ENCODE measurements at regions of chr6 and their contacts with region 1.

Region 1: GRCh38 chr6:35202066-35202546 is 11.7 kb upstream of the SCUBE3 start:
- DNase-seq: no peak
- H3K4me3 ChIP-seq: no peak overlapping the region
- H3K4me3 Mint-ChIP-seq: no peak overlapping the region
- H3K27ac ChIP-seq: no peak overlapping the region
- H3K27ac Mint-ChIP-seq: no peak overlapping the region
- H3K4me1 ChIP-seq: no peaks in the 10 kb centered on the region
- H3K4me1 Mint-ChIP-seq: peaks cover 0 to 2% (median 0%) of the 10 kb centered on the region in 4 donors
- H3K27me3 ChIP-seq: peaks cover 19% of the 10 kb centered on the region
- H3K27me3 Mint-ChIP-seq: peaks cover 32 to 54% of the 10 kb centered on the region in 2 donors

Region 2: DNA sequence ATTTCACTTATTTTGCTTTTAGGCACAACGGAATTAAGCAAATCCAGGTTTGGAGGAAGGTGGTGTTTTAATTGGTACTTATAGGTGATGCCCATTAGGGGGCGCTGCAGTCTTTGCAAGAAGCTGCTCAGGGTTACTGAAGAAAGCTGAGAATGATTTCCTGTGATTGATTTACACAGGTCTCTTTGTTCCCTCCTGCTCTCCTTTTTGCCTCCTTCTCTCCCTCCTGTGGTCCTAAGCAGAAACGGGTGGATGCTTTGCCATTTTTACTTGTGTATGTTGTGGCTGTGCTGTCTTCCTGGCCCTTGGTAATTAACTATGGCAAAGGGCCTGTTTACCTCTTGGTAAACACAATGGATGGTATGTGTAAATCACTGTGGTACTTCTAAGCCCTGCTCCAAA is 215.3 kb before region 1 on chr6:
- CTCF ChIA-PET with region 1: interaction called, 7 read pairs
- POLR2A ChIA-PET with region 1: no interaction called
- intact Hi-C with region 1: loop called (anchors 1 kb)
- DNase-seq: peak; percentile 45 to 60 (median 52)
- H3K4me3 ChIP-seq: no peak overlapping the region
- H3K4me3 Mint-ChIP-seq: no peak overlapping the region
- H3K27ac ChIP-seq: no peak overlapping the region
- H3K27ac Mint-ChIP-seq: no peak overlapping the region
- H3K4me1 ChIP-seq: no peaks in the 10 kb centered on the region
- H3K4me1 Mint-ChIP-seq: no peaks in the 10 kb centered on the region
- H3K27me3 ChIP-seq: no peaks in the 10 kb centered on the region
- H3K27me3 Mint-ChIP-seq: no peaks in the 10 kb centered on the region

Region 3: GRCh38 chr6:36874443-36875249 is 1672.5 kb after region 1 on chr6 and contains the start of gene PPIL1:
- CTCF ChIA-PET with region 1: no interaction called
- POLR2A ChIA-PET with region 1: no interaction called
- intact Hi-C with region 1: no loop called
- DNase-seq: peak; percentile 91 to 94 (median 92)
- H3K4me3 ChIP-seq: peak within 1 kb of the TSS; percentile 95 to 96
- H3K4me3 Mint-ChIP-seq: peak within 1 kb of the TSS; percentile 95 to 100 (median 98)
- H3K27ac ChIP-seq: peak within 1 kb of the TSS; percentile 87
- H3K27ac Mint-ChIP-seq: peak within 1 kb of the TSS; percentile 91 to 100 (median 98)
- H3K4me1 ChIP-seq: peaks cover 23% of the 10 kb centered on the region
- H3K4me1 Mint-ChIP-seq: peaks cover 22 to 37% (median 31%) of the 10 kb centered on the region in 4 donors
- H3K27me3 ChIP-seq: no peaks in the 10 kb centered on the region
- H3K27me3 Mint-ChIP-seq: peaks cover 0 to 1% of the 10 kb centered on the region in 2 donors
- total RNA-seq, gene PPIL1: 8.4 to 9.2 TPM

Measured in CD4-positive, alpha-beta memory T cell (primary cell).